ENCODE measurements at regions of chr10 and their contacts with region 1.

Region 1: GRCh38 chr10:69515699-69516259 is 57.4 kb downstream of the NEUROG3 start:
- DNase-seq: peak; percentile 93
- H3K4me3 Mint-ChIP-seq: no peak overlapping the region
- H3K27ac Mint-ChIP-seq: no peak overlapping the region
- H3K4me1 Mint-ChIP-seq: no peaks in the 10 kb centered on the region
- H3K27me3 Mint-ChIP-seq: peaks cover 35% of the 10 kb centered on the region

Region 2: GRCh38 chr10:69639291-69640195 is 123.8 kb after region 1 on chr10:
- intact Hi-C with region 1: loop called (anchors 1 kb)
- DNase-seq: peak; percentile 89
- H3K4me3 Mint-ChIP-seq: no peak overlapping the region
- H3K27ac Mint-ChIP-seq: no peak overlapping the region
- H3K4me1 Mint-ChIP-seq: peaks cover 2% of the 10 kb centered on the region
- H3K27me3 Mint-ChIP-seq: peaks cover 5% of the 10 kb centered on the region

Region 3: DNA sequence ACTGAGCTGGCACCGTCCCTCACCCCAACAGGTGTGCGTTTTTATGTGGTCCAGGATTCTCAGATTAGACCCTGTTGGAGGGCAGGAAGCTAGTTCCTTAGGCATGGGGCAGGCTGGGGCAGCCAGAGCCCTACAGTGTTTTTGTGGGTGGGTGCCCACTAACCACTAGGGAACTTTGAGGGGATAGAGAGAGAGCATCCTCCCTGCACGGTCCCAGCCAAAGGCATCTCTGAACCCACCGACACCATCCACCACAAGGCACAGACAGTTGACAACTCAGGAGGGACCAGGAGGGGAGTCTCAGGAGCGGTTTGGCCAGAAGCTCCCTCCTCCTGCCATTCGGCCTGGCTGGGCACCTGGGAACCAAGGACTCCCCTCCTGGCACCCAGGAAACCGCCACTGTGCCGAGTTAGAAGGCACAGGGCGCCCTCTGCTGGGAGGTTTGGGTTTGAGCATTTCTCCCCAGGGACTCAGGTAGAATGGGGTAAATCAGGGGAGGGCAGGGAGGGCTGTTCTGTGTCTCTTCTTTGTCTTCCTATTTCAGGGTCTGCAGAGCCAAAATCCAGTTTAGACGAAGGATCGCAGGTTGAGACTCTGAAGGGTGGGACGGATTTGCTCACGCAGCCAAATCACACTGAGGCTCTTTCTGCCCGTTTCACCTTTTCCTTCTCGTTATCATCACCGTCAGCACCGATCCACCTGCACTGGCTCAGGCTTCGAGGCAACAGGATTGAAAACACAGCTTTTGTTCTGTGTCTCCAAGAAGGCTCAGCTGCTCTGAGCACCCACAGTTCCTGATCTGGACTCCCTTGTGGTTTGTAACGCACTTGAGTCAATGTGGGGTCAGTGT is 201.2 kb after region 1 on chr10:
- intact Hi-C with region 1: loop called (anchors 1 kb)
- DNase-seq: peak; percentile 87
- H3K4me3 Mint-ChIP-seq: no peak overlapping the region
- H3K27ac Mint-ChIP-seq: no peak overlapping the region
- H3K4me1 Mint-ChIP-seq: no peaks in the 10 kb centered on the region
- H3K27me3 Mint-ChIP-seq: peaks cover 6% of the 10 kb centered on the region

Region 4: GRCh38 chr10:69914398-69915214 is 398.8 kb after region 1 on chr10:
- intact Hi-C with region 1: loop called (anchors 10 kb)
- DNase-seq: peak; percentile 86
- H3K4me3 Mint-ChIP-seq: no peak overlapping the region
- H3K27ac Mint-ChIP-seq: no peak overlapping the region
- H3K4me1 Mint-ChIP-seq: no peaks in the 10 kb centered on the region
- H3K27me3 Mint-ChIP-seq: peaks cover 7% of the 10 kb centered on the region

Measured in activated CD4-positive, alpha-beta T cell treated with anti-CD3 and anti-CD28 coated beads, Interleukin-2, amount 10 ng/mL, durations not matched to agents 24 days and 14 days (primary cell).